GM12878 (cell line): ENCODE measurements at regions of chr5 and their contacts with region 1.

Region 1: DNA sequence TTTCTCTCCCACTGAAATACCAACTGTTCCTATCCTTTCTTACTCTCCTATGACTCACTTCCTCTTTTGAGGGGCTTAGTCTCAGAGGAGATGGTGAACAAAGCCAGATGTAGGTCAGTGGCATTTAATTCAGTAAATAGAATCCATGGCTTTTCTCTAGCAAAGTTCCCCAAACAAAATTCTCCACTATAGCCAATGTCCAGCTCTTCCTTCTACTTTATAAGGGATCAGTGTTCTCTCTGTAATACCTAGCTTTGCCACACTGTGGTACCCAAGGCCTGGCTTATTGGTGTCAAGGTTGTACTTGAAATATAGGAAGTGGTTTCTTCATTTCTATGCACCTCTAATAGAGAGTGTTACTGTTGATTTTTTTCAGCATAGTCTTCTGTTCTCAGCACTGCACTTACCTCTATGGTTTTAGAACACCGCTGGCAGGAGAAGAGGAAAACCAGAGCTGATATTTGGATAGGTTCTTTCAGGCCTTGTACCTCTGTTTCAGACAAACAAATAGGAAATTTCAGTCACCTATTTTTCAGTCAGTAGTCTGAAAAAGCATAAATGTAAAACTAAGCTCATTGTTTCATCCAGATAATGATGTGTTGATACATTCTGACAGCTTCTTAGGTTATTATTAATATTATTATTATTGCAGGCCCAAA is 40.6 kb upstream of the ITGA2 start:
- DNase-seq: peak; percentile 42
- ATAC-seq: peak; percentile 99
- H3K4me3 ChIP-seq: no peak overlapping the region
- H3K27ac ChIP-seq: no peak overlapping the region
- H3K4me1 ChIP-seq: no peaks in the 10 kb centered on the region
- H3K27me3 ChIP-seq: no peaks in the 10 kb centered on the region
- CTCF ChIP-seq: peak; percentile 72 to 78 (median 76)
- EP300 ChIP-seq: no peak
- POLR2A ChIP-seq: no peak
- RAD21 ChIP-seq: peak; percentile 98

Region 2: DNA sequence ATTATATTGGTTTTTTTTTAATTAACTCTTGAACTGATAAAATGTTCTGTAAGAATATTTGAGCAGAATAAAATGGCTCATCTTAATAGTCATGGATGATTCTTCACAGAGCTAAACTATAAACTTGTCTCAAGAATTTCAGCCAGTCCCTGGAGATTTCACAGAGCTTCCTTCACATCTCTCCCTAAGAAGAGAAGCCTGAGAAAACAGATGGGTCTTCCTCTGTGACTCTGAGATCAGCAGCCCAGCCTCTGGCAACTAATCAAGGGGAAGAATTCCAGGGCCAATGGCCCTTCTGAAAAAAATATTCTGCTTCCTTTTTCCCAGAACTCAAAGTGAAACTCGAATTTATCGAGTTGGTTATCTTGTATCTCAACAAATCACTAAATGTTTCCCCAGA is 283.0 kb before region 1 on chr5:
- CTCF ChIA-PET with region 1: no interaction called
- POLR2A ChIA-PET with region 1: no interaction called
- RAD21 ChIA-PET with region 1: no interaction called
- SMC1A ChIA-PET with region 1: no interaction called
- in situ Hi-C with region 1: no loop called
- intact Hi-C with region 1: no loop called
- DNase-seq: no peak
- ATAC-seq: no peak
- H3K4me3 ChIP-seq: no peak overlapping the region
- H3K27ac ChIP-seq: no peak overlapping the region
- H3K4me1 ChIP-seq: no peaks in the 10 kb centered on the region
- H3K27me3 ChIP-seq: 0 out of 4 replicates have a peak, but pooled peaks cover 0 to 2% of the 10 kb centered on the region in 2 experiments
- CTCF ChIP-seq: no peak
- EP300 ChIP-seq: no peak
- POLR2A ChIP-seq: no peak
- RAD21 ChIP-seq: no peak

Region 3: GRCh38 chr5:53041071-53041692 is 92.6 kb after region 1 on chr5:
- CTCF ChIA-PET with region 1: interaction called, 27 read pairs
- POLR2A ChIA-PET with region 1: no interaction called
- RAD21 ChIA-PET with region 1: interaction called, 14 read pairs
- SMC1A ChIA-PET with region 1: interaction called, 23 read pairs
- in situ Hi-C with region 1: no loop called
- intact Hi-C with region 1: loop called (anchors 5 kb)
- DNase-seq: peak; percentile 21
- ATAC-seq: peak; percentile 95
- H3K4me3 ChIP-seq: no peak overlapping the region
- H3K27ac ChIP-seq: no peak overlapping the region
- H3K4me1 ChIP-seq: peaks cover 4% of the 10 kb centered on the region; the same call in 1 of the 2 replicates
- H3K27me3 ChIP-seq: no peaks in the 10 kb centered on the region
- CTCF ChIP-seq: no peak
- EP300 ChIP-seq: peak in 1 of 2 experiments; percentile 35; a peak in 1 of 4 replicates
- POLR2A ChIP-seq: no peak
- RAD21 ChIP-seq: no peak

Region 4: DNA sequence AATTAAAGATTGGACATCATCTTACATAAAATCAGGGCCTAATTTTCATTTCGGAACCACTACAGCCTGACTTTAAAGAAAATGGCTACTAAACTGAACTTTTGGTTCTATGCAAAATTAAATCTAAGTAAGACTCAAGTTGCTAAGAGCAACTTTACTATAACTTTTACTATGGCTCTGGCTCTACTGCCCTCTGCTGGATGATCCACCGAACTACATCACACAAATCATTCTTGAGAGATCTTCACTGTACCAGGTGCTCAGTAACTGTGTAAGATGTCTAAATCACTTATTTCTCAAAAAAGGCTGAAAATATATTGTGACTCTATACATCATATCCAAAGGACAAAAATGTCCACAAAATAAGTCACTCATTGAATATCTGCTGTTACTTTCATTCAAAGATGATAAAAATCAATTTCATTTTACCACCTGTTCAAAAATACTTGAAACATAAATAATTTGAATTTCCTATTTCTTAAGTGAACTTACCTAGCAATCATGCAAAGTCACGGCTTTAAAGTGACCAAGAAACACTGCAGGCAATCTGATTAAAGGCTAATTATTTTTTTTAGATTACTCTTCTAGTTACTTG is 147.5 kb after region 1 on chr5:
- CTCF ChIA-PET with region 1: interaction called, 127 read pairs
- POLR2A ChIA-PET with region 1: interaction called, 6 read pairs
- RAD21 ChIA-PET with region 1: interaction called, 49 read pairs
- SMC1A ChIA-PET with region 1: interaction called, 51 read pairs
- in situ Hi-C with region 1: loop called (anchors 5 kb)
- intact Hi-C with region 1: loop called (anchors 1 kb)
- DNase-seq: peak; percentile 11
- ATAC-seq: peak; percentile 87
- H3K4me3 ChIP-seq: no peak overlapping the region
- H3K27ac ChIP-seq: no peak overlapping the region
- H3K4me1 ChIP-seq: no peaks in the 10 kb centered on the region
- H3K27me3 ChIP-seq: no peaks in the 10 kb centered on the region
- CTCF ChIP-seq: peak; percentile 73 to 79 (median 76)
- EP300 ChIP-seq: no peak
- POLR2A ChIP-seq: no peak
- RAD21 ChIP-seq: peak; percentile 80

Region 5: GRCh38 chr5:53114988-53115387 is 166.4 kb after region 1 on chr5:
- CTCF ChIA-PET with region 1: interaction called, 16 read pairs
- POLR2A ChIA-PET with region 1: no interaction called
- RAD21 ChIA-PET with region 1: interaction called, 8 read pairs
- SMC1A ChIA-PET with region 1: interaction called, 3 read pairs
- in situ Hi-C with region 1: no loop called
- intact Hi-C with region 1: no loop called
- DNase-seq: no peak
- ATAC-seq: no peak
- H3K4me3 ChIP-seq: no peak overlapping the region
- H3K27ac ChIP-seq: no peak overlapping the region
- H3K4me1 ChIP-seq: peaks cover 5% of the 10 kb centered on the region; the same call in 1 of the 2 replicates
- H3K27me3 ChIP-seq: no peaks in the 10 kb centered on the region; a peak in 1 of 4 replicates
- CTCF ChIP-seq: peak in 1 of 3 experiments; percentile 3; a peak in 1 of 6 replicates
- EP300 ChIP-seq: no peak
- POLR2A ChIP-seq: no peak
- RAD21 ChIP-seq: no peak

Region 6: DNA sequence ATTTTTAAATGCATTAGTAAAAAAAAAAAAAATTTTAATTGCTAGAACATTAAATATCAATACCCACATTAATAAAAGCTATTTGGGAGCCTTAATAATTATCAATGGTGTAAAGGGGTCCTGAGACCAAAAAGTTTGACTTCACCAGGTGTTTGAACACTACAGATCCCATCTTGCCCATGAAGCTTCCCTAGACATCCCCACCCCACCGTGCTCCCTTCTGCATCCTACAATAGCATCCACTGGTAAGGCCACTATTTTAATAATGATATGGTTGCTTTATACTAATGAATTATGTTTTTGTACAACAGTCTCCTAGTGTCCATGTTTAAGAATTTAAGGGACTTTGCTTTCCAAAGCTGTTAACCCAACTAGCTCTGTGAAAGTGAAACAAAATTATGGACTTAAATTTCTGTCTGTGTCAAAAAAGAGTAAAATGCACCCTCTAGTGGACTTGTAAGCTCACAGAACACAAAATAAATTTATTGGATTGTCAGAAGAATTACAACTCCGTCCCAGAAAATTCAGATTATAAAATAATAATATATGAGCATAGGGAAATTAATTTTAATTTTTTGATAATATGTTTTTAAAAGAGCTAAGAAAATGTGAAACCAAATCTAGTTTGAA is 1285.9 kb after region 1 on chr5:
- CTCF ChIA-PET with region 1: interaction called, 10 read pairs
- POLR2A ChIA-PET with region 1: no interaction called
- RAD21 ChIA-PET with region 1: interaction called, 6 read pairs
- SMC1A ChIA-PET with region 1: no interaction called
- in situ Hi-C with region 1: no loop called
- intact Hi-C with region 1: loop called (anchors 10 kb)
- DNase-seq: no peak
- ATAC-seq: peak; percentile 72
- H3K4me3 ChIP-seq: no peak overlapping the region
- H3K27ac ChIP-seq: no peak overlapping the region
- H3K4me1 ChIP-seq: no peaks in the 10 kb centered on the region
- H3K27me3 ChIP-seq: no peaks in the 10 kb centered on the region
- CTCF ChIP-seq: peak; percentile 26 to 50 (median 50); a peak in 5 of 6 replicates
- EP300 ChIP-seq: no peak
- POLR2A ChIP-seq: no peak
- RAD21 ChIP-seq: peak; percentile 66